Activated CD4-positive, alpha-beta memory T cell treated with anti-CD3 and anti-CD28 coated beads, Interleukin-2, amount 10 ng/mL, durations not matched to agents 7 days and 5 days (primary cell): ENCODE measurements at regions of chr19 and their contacts with region 1.

Region 1: DNA sequence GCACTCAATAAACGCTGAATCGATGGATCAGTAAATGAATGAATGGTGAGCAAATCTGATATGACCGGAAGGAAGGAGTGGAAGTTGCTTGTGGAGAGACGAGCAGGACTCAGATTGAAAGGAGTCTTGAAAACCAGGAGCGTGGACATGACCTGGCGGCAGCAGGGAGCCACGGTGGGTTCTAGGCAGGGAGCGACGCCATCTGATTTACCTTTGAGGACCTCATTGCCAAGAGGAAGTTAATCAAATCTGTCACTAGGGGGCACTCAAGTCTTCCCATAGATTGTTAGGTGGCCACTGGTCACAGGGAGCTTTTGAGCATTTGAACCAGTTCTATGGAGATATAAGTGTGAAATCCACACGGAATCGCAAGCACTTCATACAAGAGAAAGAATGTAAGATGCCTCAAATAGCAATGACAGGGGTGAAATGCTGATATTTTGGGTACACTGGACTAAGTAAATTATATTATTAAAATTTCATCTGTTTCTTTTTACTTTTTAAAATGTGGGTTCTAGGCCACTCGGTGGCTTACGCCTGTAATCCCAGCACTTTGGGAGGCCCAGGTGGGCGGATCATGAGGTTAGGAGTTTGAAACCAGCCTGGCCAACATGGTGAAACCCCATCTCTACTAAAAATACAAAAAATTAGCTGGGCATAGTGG is 9.2 kb upstream of the FBN3 start:
- DNase-seq: peak; percentile 50
- H3K4me3 Mint-ChIP-seq: no peak overlapping the region
- H3K27ac Mint-ChIP-seq: no peak overlapping the region
- H3K4me1 Mint-ChIP-seq: peaks cover 8% of the 10 kb centered on the region
- H3K27me3 Mint-ChIP-seq: peaks cover 18% of the 10 kb centered on the region

Region 2: DNA sequence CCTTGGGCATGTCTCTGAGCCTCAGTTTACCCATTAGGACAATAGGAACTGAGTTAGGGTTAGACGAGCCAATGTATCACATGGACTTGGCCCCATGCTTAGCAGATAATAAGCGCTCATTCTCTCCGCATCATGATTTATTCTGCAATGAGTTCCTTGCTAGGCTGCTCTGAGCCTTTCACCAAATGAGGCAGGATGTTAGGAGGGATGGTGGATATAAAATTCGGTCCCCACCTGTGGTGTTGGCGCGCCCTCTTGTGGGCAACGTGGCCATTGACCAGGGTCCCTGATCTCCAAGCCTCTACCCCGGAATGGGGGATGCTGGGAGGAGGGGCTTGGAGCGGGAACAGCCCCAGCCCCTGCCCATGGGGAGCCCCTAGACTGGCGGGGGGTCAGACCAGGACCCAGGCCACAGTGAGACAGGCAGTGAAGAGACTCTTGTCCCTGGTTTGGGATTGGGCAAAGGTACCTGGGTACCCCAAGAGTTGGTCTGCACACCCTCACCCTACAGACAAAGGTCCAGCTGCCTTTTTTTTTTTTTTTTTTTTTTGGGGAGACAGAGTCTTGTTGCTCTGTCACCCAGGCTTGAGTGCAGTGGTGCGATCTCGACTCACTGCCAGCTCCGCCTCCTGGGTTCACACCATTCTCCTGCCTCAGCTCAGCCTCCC is 94.5 kb after region 1 on chr19:
- CTCF ChIA-PET with region 1: interaction called, 17 read pairs
- POLR2A ChIA-PET with region 1: interaction called, 3 read pairs
- DNase-seq: peak; percentile 86
- H3K4me3 Mint-ChIP-seq: no peak overlapping the region
- H3K27ac Mint-ChIP-seq: no peak overlapping the region
- H3K4me1 Mint-ChIP-seq: peaks cover 13% of the 10 kb centered on the region
- H3K27me3 Mint-ChIP-seq: no peaks in the 10 kb centered on the region